Endothelial cell of umbilical vein (primary cell): ENCODE measurements at regions of chr1 and their contacts with region 1.

Region 1: GRCh38 chr1:45521398-45522323 is at the start of gene PRDX1:
- DNase-seq: peak; percentile 96
- H3K4me3 ChIP-seq: peak within 1 kb of the TSS; percentile 79 to 86 (median 80)
- H3K27ac ChIP-seq: peak within 1 kb of the TSS; percentile 87
- H3K4me1 ChIP-seq: peaks cover 19% of the 10 kb centered on the region
- H3K27me3 ChIP-seq: no peaks in the 10 kb centered on the region
- CTCF ChIP-seq: no peak
- POLR2A ChIP-seq: peak; percentile 100
- total RNA-seq, gene PRDX1: 681 and 685 TPM in 2 replicates

Region 2: DNA sequence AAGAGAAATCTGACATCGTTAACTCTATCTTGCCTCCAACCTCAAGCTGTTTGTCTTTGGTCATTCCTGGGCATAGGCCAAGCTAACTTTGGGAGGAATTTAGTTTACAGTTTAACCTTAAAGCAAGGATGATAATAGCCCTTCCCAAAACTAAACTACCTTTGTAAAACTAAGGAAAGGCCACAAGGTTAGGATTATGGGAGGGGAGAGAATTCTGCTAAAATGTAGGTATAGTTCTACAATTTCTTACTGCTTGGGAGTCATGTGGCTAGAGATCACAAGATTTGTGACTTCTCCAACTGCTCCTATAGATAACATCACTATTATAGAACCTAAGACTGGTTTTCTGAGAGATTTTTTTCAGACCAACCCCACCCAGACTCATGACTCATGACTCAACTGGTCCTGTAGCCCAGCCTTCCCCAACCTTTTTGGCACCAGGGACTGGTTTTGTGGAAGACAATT is 110.8 kb before region 1 on chr1:
- CTCF ChIA-PET with region 1: no interaction called
- POLR2A ChIA-PET with region 1: no interaction called
- dilution Hi-C with region 1: no loop called
- intact Hi-C with region 1: no loop called
- DNase-seq: no peak
- H3K4me3 ChIP-seq: no peak overlapping the region
- H3K27ac ChIP-seq: no peak overlapping the region
- H3K4me1 ChIP-seq: no peaks in the 10 kb centered on the region
- H3K27me3 ChIP-seq: no peaks in the 10 kb centered on the region
- CTCF ChIP-seq: no peak
- POLR2A ChIP-seq: no peak

Region 3: GRCh38 chr1:45499415-45499769 is 22.3 kb before region 1 on chr1:
- CTCF ChIA-PET with region 1: interaction called, 7 read pairs
- POLR2A ChIA-PET with region 1: interaction called, 41 read pairs
- dilution Hi-C with region 1: no loop called
- intact Hi-C with region 1: no loop called
- DNase-seq: peak; percentile 12
- H3K4me3 ChIP-seq: peak overlapping the region; percentile 23 to 80 (median 54)
- H3K27ac ChIP-seq: no peak overlapping the region
- H3K4me1 ChIP-seq: peaks cover 11% of the 10 kb centered on the region
- H3K27me3 ChIP-seq: no peaks in the 10 kb centered on the region
- CTCF ChIP-seq: no peak
- POLR2A ChIP-seq: no peak

Region 4: DNA sequence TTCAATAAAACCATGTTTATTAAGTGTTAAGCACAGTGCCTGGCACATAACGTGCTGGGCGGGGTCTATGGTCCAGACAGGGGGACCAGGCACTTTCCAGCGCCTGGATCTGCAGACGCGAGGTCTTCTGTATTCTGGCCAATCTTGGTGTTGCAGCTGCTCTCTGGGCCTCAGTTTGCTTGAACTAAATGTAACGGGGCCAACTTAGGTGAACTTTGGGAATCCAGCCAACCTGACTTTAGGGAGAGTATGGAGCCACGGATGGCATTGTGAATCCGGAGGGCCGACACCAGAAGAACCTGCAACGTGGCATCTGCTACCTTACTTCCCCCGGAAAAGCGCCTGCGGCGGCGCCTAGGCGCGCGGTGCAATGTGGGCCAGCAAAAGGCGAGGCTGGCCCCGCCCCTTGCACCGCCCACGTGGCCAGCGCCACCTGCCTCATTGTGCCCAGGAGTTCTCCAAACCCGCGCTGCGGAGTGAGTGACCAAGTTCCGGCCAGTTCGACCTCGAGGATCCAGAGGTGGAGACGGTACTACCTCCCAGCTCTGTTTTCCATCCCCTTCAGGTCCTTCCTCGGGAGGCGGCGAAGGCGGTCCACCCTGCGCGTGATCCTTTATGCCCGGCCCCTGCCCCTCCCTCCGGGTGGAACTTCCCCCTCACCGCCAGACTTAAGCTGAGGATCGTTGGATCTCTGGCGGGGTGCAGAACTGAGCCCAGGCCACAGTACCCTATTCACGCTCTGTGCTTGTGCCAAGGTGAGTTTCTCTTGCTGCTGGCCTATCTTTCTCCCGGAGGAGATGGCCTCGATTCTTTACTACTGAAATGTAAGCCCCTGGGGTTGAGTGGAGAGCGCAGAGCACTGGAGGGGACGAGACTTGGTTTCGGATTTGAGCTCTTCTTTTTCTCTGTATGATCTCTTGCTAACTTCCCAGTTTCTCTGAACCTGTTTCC is 29.0 kb after region 1 on chr1 and contains the start of gene AKR1A1:
- CTCF ChIA-PET with region 1: interaction called, 9 read pairs
- POLR2A ChIA-PET with region 1: interaction called, 83 read pairs
- dilution Hi-C with region 1: no loop called
- intact Hi-C with region 1: loop called (anchors 1 kb)
- DNase-seq: peak; percentile 90
- H3K4me3 ChIP-seq: peak within 1 kb of the TSS; percentile 57 to 93 (median 80)
- H3K27ac ChIP-seq: peak within 1 kb of the TSS; percentile 49
- H3K4me1 ChIP-seq: peaks cover 13% of the 10 kb centered on the region
- H3K27me3 ChIP-seq: no peaks in the 10 kb centered on the region
- CTCF ChIP-seq: no peak
- POLR2A ChIP-seq: peak; percentile 96
- total RNA-seq, gene AKR1A1: 166 and 172 TPM in 2 replicates

Region 5: GRCh38 chr1:45563843-45564242 is 42.2 kb after region 1 on chr1:
- CTCF ChIA-PET with region 1: interaction called, 60 read pairs
- POLR2A ChIA-PET with region 1: interaction called, 49 read pairs
- dilution Hi-C with region 1: no loop called
- intact Hi-C with region 1: no loop called
- DNase-seq: no peak
- H3K4me3 ChIP-seq: no peak overlapping the region
- H3K27ac ChIP-seq: no peak overlapping the region
- H3K4me1 ChIP-seq: no peaks in the 10 kb centered on the region
- H3K27me3 ChIP-seq: no peaks in the 10 kb centered on the region
- CTCF ChIP-seq: no peak
- POLR2A ChIP-seq: no peak

Region 6: GRCh38 chr1:45694823-45695222 is 173.2 kb after region 1 on chr1:
- CTCF ChIA-PET with region 1: no interaction called
- POLR2A ChIA-PET with region 1: no interaction called
- dilution Hi-C with region 1: no loop called
- intact Hi-C with region 1: no loop called
- DNase-seq: no peak
- H3K4me3 ChIP-seq: no peak overlapping the region
- H3K27ac ChIP-seq: no peak overlapping the region
- H3K4me1 ChIP-seq: no peaks in the 10 kb centered on the region
- H3K27me3 ChIP-seq: no peaks in the 10 kb centered on the region
- CTCF ChIP-seq: no peak
- POLR2A ChIP-seq: no peak